CD8-positive, alpha-beta T cell (primary cell): ENCODE measurements at regions of chr10 and their contacts with region 1.

Region 1: GRCh38 chr10:48934672-48935501 is 4.8 kb downstream of the LRRC18 start:
- DNase-seq: peak in 1 of 9 experiments; percentile 31
- ATAC-seq: no peak
- H3K4me3 ChIP-seq: no peak overlapping the region
- H3K4me3 Mint-ChIP-seq: no peak overlapping the region
- H3K27ac ChIP-seq: no peak overlapping the region
- H3K27ac Mint-ChIP-seq: no peak overlapping the region
- H3K4me1 ChIP-seq: no peaks in the 10 kb centered on the region
- H3K4me1 Mint-ChIP-seq: no peaks in the 10 kb centered on the region
- H3K27me3 ChIP-seq: no peaks in the 10 kb centered on the region
- H3K27me3 Mint-ChIP-seq: peaks cover 2% of the 10 kb centered on the region
- CTCF ChIP-seq: no peak

Region 2: DNA sequence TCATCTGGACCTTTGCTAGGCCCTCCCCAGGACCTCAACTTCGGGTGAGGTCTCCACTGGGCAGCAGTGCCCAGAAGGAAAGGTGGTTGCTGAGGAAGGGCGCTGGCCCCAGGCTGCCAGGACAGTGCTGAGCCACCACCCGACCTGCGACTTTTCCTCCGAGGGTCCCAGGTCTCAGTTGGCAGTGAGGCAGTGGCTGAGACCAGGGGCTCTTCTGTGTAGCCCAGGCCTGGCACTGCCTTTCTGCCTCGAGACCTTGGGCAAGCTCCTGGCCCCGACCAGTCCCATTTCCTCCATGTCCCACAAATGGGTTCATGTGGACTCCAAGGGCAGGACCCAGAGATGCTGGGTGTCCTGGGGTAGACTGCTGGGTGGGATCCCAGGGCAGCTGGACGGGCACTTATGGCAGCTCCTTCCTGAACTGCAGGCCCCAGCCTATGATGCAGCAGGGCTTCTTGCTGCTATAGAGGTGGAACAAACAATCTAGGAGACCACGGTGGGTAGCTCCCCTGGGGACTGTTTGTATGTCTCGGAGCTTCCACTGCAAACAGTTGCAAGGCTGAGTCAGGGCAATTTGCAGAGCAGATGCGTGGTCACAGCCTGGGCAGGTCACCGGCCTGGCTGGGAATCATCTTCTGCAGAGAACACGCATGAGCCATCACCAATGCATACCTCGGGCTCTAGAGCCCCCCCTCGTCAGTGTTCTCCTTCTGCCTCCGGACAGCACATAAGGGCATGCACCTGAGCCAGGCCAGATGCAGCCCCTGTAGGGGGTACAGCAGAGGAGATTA is 22.7 kb after region 1 on chr10:
- CTCF ChIA-PET with region 1: no interaction called
- POLR2A ChIA-PET with region 1: no interaction called
- intact Hi-C with region 1: loop called in 1 of 2 experiments (anchors 2 kb)
- DNase-seq: no peak
- ATAC-seq: no peak
- H3K4me3 ChIP-seq: no peak overlapping the region
- H3K4me3 Mint-ChIP-seq: no peak overlapping the region
- H3K27ac ChIP-seq: no peak overlapping the region
- H3K27ac Mint-ChIP-seq: no peak overlapping the region
- H3K4me1 ChIP-seq: no peaks in the 10 kb centered on the region
- H3K4me1 Mint-ChIP-seq: no peaks in the 10 kb centered on the region
- H3K27me3 ChIP-seq: no peaks in the 10 kb centered on the region
- H3K27me3 Mint-ChIP-seq: peaks cover 3% of the 10 kb centered on the region
- CTCF ChIP-seq: no peak

Region 3: DNA sequence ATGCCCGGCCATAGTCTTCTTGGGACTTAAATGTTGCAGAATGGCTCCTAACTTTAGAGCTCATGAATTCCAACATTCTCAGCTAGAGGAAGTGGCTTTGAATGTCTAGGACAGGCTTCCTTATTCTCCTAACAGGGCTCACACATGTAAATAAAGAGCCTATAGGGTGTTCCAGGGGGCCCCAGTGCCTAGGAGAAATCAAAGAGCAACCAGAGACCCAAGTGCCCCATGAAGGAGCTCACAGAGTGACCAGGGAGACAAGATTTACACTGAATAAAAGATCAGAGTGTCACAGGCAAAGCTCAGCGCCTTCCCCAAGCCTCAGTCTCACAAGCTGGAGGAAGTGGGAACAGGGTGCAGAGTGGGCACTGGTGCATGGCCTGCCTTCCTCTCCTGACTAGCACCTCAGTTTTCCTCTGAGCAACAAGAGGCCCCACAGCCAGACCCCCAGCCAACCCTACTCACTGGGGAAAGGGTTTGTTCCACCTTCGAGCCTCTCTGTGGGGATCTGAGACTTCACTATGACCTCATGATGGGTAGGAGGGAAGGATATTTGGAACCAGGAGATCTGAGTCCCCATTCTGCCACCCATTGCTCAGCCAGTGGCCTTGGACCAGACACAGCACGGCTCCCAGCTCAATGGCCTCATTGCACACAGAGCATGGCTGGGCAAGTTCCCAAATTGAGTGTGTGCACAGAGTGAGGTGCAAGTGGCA is 237.3 kb after region 1 on chr10:
- CTCF ChIA-PET with region 1: no interaction called
- POLR2A ChIA-PET with region 1: no interaction called
- intact Hi-C with region 1: loop called in 1 of 2 experiments (anchors 5 kb)
- DNase-seq: no peak
- ATAC-seq: no peak
- H3K4me3 ChIP-seq: no peak overlapping the region
- H3K4me3 Mint-ChIP-seq: no peak overlapping the region
- H3K27ac ChIP-seq: no peak overlapping the region
- H3K27ac Mint-ChIP-seq: no peak overlapping the region
- H3K4me1 ChIP-seq: no peaks in the 10 kb centered on the region
- H3K4me1 Mint-ChIP-seq: peaks cover 3% of the 10 kb centered on the region
- H3K27me3 ChIP-seq: no peaks in the 10 kb centered on the region
- H3K27me3 Mint-ChIP-seq: no peaks in the 10 kb centered on the region
- CTCF ChIP-seq: no peak

Region 4: GRCh38 chr10:49254556-49255318 is 319.9 kb after region 1 on chr10:
- CTCF ChIA-PET with region 1: no interaction called
- POLR2A ChIA-PET with region 1: no interaction called
- intact Hi-C with region 1: no loop called
- DNase-seq: peak; percentile 12 to 81 (median 38)
- ATAC-seq: peak; percentile 69
- H3K4me3 ChIP-seq: no peak overlapping the region
- H3K4me3 Mint-ChIP-seq: no peak overlapping the region
- H3K27ac ChIP-seq: peak overlapping the region in 1 of 2 experiments; percentile 24
- H3K27ac Mint-ChIP-seq: no peak overlapping the region
- H3K4me1 ChIP-seq: peaks cover 25% of the 10 kb centered on the region
- H3K4me1 Mint-ChIP-seq: peaks cover 7% of the 10 kb centered on the region
- H3K27me3 ChIP-seq: peaks cover 0 to 2% of the 10 kb centered on the region in 2 experiments
- H3K27me3 Mint-ChIP-seq: no peaks in the 10 kb centered on the region
- CTCF ChIP-seq: no peak